Stomach (tissue), 19 donors: ENCODE measurements at regions of chr6 and their contacts with region 1.

Region 1: GRCh38 chr6:125314019-125314581 is 12.3 kb upstream of the HDDC2 start:
- DNase-seq: peak; percentile 58 to 88
- H3K4me3 ChIP-seq: no peak overlapping the region
- H3K27ac ChIP-seq: no peak overlapping the region
- H3K4me1 ChIP-seq: peaks cover 0 to 7% (median 2%) of the 10 kb centered on the region in 4 donors
- H3K27me3 ChIP-seq: no peaks in the 10 kb centered on the region
- CTCF ChIP-seq: peak in 5 of 7 experiments; percentile 20 to 73 (median 63)
- EP300 ChIP-seq: no peak
- POLR2A ChIP-seq: no peak

Region 2: DNA sequence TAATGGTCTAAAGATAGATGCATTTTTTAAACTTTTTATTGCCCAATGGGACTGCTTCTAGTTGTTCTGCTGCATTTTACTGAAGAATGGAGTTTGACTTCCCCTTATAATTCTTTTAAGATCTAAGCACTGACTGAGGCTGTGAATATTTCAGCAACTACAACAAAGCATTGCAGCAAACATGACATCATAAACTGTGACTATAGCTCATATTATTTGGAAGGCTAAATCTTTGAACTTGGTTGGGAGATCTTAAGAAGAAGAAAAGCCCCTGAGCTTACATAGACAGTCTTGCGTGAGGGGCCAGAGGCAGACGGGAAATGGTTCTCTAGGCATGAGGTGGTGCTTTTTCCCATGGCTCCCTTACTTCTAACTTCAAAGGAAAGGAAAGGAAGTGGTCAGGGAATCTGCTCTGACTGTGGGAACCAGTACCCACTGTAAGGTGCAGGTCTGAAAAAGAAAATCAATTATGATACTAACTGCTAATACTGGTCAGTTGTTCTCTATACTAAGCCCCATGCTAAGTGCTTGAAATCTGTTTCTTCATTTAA is 450.1 kb after region 1 on chr6:
- intact Hi-C with region 1: loop called (anchors 5 kb)
- DNase-seq: no peak
- H3K4me3 ChIP-seq: no peak overlapping the region
- H3K27ac ChIP-seq: no peak overlapping the region
- H3K4me1 ChIP-seq: no peaks in the 10 kb centered on the region
- H3K27me3 ChIP-seq: peaks cover 0 to 24% (median 6%) of the 10 kb centered on the region in 3 donors
- CTCF ChIP-seq: no peak
- EP300 ChIP-seq: no peak
- POLR2A ChIP-seq: no peak